ENCODE measurements at regions of chr1 and their contacts with region 1.

Region 1: DNA sequence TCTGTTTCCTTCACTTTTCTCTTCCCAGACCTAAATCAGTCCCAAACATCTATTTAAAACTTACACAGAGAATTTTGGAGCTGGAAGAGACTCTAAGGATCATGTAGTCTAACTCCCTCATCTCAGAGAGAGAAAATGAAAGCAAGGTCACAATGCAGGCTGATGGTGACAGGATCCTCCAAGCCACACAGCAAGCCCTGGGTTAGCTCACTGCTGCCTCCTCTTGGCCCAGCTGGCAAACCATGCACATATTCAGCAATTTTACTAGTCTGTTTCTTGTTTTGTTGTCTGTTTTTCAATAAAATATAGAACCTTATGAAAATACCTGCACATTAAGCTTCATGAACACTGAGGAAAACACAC is 27.7 kb upstream of the LY9 start:
- DNase-seq: peak; percentile 93
- ATAC-seq: peak; percentile 93
- H3K4me3 Mint-ChIP-seq: peak overlapping the region; percentile 82
- H3K27ac Mint-ChIP-seq: peak overlapping the region; percentile 95
- H3K4me1 Mint-ChIP-seq: peaks cover 46% of the 10 kb centered on the region
- H3K27me3 Mint-ChIP-seq: no peaks in the 10 kb centered on the region

Region 2: GRCh38 chr1:160675641-160676410 is 92.5 kb before region 1 on chr1:
- CTCF ChIA-PET with region 1: interaction called, 91 read pairs
- POLR2A ChIA-PET with region 1: interaction called, 6 read pairs
- DNase-seq: peak; percentile 86
- ATAC-seq: peak; percentile 79
- H3K4me3 Mint-ChIP-seq: no peak overlapping the region
- H3K27ac Mint-ChIP-seq: peak overlapping the region; percentile 80
- H3K4me1 Mint-ChIP-seq: peaks cover 44% of the 10 kb centered on the region
- H3K27me3 Mint-ChIP-seq: no peaks in the 10 kb centered on the region

Region 3: GRCh38 chr1:160711602-160712311 is 56.5 kb before region 1 on chr1 and contains the start of gene CD48:
- CTCF ChIA-PET with region 1: interaction called, 52 read pairs
- POLR2A ChIA-PET with region 1: interaction called, 6 read pairs
- DNase-seq: peak; percentile 79
- ATAC-seq: peak; percentile 48
- H3K4me3 Mint-ChIP-seq: no peak within 1 kb of the TSS
- H3K27ac Mint-ChIP-seq: no peak within 1 kb of the TSS
- H3K4me1 Mint-ChIP-seq: peaks cover 39% of the 10 kb centered on the region
- H3K27me3 Mint-ChIP-seq: no peaks in the 10 kb centered on the region
- total RNA-seq, gene CD48: 325 to 327 TPM

Region 4: GRCh38 chr1:160739098-160739511 is 29.2 kb before region 1 on chr1 and contains the start of gene SLAMF7:
- CTCF ChIA-PET with region 1: interaction called, 217 read pairs
- POLR2A ChIA-PET with region 1: interaction called, 16 read pairs
- DNase-seq: peak; percentile 68
- ATAC-seq: peak; percentile 60
- H3K4me3 Mint-ChIP-seq: peak within 1 kb of the TSS; percentile 85
- H3K27ac Mint-ChIP-seq: peak within 1 kb of the TSS; percentile 81
- H3K4me1 Mint-ChIP-seq: peaks cover 69% of the 10 kb centered on the region
- H3K27me3 Mint-ChIP-seq: no peaks in the 10 kb centered on the region
- total RNA-seq, gene SLAMF7: 88.5 to 102 TPM

Region 5: DNA sequence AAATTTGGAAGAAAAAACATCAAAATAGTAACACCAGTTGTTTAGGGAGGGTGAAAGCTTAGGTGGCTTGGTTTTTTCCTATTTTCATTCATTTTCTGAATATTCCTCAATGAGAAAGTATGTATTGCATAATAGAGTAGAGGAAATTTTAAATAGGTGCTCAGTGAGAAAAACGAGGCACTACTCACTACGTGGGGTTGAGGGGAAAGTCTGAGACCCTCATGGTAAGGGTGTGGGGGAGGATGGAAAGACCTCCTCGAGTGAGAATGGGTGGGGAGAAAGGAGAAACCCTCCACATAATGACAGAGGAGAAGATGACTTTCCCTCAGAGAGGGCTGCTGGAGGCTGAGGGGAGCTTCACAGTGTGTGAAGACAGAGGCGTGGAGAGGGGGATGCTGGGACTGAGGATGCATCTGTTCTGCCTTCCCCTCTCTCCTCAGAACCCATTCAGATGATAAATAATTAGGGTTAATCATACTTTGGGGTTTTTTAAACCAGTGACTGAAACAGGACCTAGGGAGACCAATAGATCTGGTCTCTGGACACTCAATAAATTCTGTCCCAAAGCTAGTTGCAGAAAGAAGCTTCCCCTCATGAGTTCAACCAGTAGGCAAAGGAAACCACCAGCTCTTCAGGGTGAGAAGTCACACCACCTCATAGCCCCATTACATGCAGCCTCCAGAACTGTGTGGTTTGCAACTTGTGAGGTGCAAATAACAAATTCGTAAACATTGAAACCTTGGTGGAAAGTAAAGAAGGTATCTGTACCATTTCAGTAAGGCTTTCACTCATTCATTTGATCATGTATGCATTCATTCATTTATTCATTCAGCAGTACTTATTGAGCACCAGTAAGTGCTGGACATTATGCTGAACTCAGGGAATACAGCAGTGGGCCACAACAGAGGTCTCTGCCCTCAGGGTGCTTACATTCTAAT is 12.1 kb before region 1 on chr1:
- CTCF ChIA-PET with region 1: interaction called, 61 read pairs
- POLR2A ChIA-PET with region 1: interaction called, 19 read pairs
- DNase-seq: peak; percentile 74
- ATAC-seq: peak; percentile 82
- H3K4me3 Mint-ChIP-seq: peak overlapping the region; percentile 30
- H3K27ac Mint-ChIP-seq: peak overlapping the region; percentile 93
- H3K4me1 Mint-ChIP-seq: peaks cover 58% of the 10 kb centered on the region
- H3K27me3 Mint-ChIP-seq: no peaks in the 10 kb centered on the region

Region 6: GRCh38 chr1:160830321-160831153 is 62.3 kb after region 1 on chr1:
- CTCF ChIA-PET with region 1: interaction called, 32 read pairs
- POLR2A ChIA-PET with region 1: no interaction called
- DNase-seq: peak; percentile 87
- ATAC-seq: peak; percentile 83
- H3K4me3 Mint-ChIP-seq: no peak overlapping the region
- H3K27ac Mint-ChIP-seq: no peak overlapping the region
- H3K4me1 Mint-ChIP-seq: peaks cover 40% of the 10 kb centered on the region
- H3K27me3 Mint-ChIP-seq: no peaks in the 10 kb centered on the region

Region 7: DNA sequence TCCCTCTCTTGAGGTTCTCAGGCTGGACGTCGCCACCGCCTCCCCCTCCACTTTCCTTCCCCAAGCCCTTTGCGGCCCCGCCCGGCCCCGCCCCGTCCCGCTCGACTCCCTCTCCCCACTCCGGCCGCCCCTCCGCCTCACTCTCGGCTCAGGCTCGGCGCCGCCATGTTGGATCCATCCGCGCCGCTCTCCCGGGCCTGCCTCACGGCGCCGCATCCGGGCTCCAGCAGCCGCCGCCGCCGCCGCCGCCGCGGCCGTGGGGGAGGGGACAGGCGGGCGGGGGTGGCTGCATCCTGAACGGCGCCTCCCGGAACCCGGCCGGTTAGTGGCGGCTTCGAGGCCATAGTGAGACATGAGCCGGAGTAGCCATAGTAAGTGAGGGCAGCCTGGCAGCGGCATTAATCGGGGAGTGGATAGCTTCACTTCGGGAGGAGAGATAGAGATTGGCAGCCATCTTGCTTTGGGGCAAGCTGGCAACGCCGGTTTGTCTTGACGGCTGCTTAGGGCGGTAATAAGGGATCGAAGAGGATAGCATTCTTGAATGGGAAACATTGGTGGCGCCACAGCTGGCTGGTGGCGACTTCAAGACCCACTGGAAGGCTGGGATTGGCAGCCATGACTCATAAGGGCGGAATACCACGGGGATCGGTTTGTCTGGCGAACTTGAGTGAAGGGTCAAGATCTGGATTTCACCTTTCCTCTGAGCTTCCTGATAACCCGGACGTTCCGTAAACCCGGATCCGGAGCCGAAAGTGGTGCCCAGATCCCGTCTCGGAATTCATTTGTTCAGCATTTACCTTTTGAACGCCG is 364.3 kb after region 1 on chr1 and contains the start of gene DEDD:
- CTCF ChIA-PET with region 1: no interaction called
- POLR2A ChIA-PET with region 1: no interaction called
- DNase-seq: peak; percentile 93
- ATAC-seq: peak; percentile 96
- H3K4me3 Mint-ChIP-seq: no peak within 1 kb of the TSS
- H3K27ac Mint-ChIP-seq: no peak within 1 kb of the TSS
- H3K4me1 Mint-ChIP-seq: peaks cover 45% of the 10 kb centered on the region
- H3K27me3 Mint-ChIP-seq: no peaks in the 10 kb centered on the region
- total RNA-seq, gene DEDD: 34.5 to 36.3 TPM

Measured in activated CD8-positive, alpha-beta T cell treated with anti-CD3 and anti-CD28 coated beads, Interleukin-2, amount 10 ng/mL, durations not matched to agents 7 days and 5 days (primary cell).